HepG2 (cell line): ENCODE measurements at regions of chr2 and their contacts with region 1.

Region 1: GRCh38 chr2:88739985-88740600 is 48.6 kb downstream of the RPIA start:
- DNase-seq: peak; percentile 70
- ATAC-seq: peak; percentile 96
- H3K4me3 ChIP-seq: no peak overlapping the region
- H3K27ac ChIP-seq: no peak overlapping the region
- H3K4me1 ChIP-seq: peaks cover 9% of the 10 kb centered on the region
- H3K27me3 ChIP-seq: no peaks in the 10 kb centered on the region
- CTCF ChIP-seq: peak; percentile 92
- EP300 ChIP-seq: no peak
- POLR2A ChIP-seq: no peak
- RAD21 ChIP-seq: peak; percentile 61; the same call in 1 of the 2 replicates

Region 2: GRCh38 chr2:88765154-88765900 is 25.2 kb after region 1 on chr2:
- CTCF ChIA-PET with region 1: no interaction called
- POLR2A ChIA-PET with region 1: no interaction called
- in situ Hi-C with region 1: no loop called
- intact Hi-C with region 1: no loop called
- DNase-seq: no peak
- ATAC-seq: peak; percentile 23; the same call in 1 of the 3 replicates
- H3K4me3 ChIP-seq: no peak overlapping the region
- H3K27ac ChIP-seq: no peak overlapping the region
- H3K4me1 ChIP-seq: no peaks in the 10 kb centered on the region
- H3K27me3 ChIP-seq: no peaks in the 10 kb centered on the region
- CTCF ChIP-seq: no peak
- EP300 ChIP-seq: no peak
- POLR2A ChIP-seq: no peak
- RAD21 ChIP-seq: no peak

Region 3: GRCh38 chr2:88831792-88832248 is 91.7 kb after region 1 on chr2:
- CTCF ChIA-PET with region 1: no interaction called
- POLR2A ChIA-PET with region 1: no interaction called
- in situ Hi-C with region 1: no loop called
- intact Hi-C with region 1: loop called (anchors 1 kb)
- DNase-seq: peak; percentile 47
- ATAC-seq: peak; percentile 94
- H3K4me3 ChIP-seq: no peak overlapping the region
- H3K27ac ChIP-seq: no peak overlapping the region
- H3K4me1 ChIP-seq: no peaks in the 10 kb centered on the region
- H3K27me3 ChIP-seq: peaks cover 3 to 22% of the 10 kb centered on the region in 2 experiments; a peak in 3 of 5 replicates
- CTCF ChIP-seq: peak; percentile 88
- EP300 ChIP-seq: no peak
- POLR2A ChIP-seq: no peak
- RAD21 ChIP-seq: peak; percentile 40; the same call in 1 of the 2 replicates

Region 4: DNA sequence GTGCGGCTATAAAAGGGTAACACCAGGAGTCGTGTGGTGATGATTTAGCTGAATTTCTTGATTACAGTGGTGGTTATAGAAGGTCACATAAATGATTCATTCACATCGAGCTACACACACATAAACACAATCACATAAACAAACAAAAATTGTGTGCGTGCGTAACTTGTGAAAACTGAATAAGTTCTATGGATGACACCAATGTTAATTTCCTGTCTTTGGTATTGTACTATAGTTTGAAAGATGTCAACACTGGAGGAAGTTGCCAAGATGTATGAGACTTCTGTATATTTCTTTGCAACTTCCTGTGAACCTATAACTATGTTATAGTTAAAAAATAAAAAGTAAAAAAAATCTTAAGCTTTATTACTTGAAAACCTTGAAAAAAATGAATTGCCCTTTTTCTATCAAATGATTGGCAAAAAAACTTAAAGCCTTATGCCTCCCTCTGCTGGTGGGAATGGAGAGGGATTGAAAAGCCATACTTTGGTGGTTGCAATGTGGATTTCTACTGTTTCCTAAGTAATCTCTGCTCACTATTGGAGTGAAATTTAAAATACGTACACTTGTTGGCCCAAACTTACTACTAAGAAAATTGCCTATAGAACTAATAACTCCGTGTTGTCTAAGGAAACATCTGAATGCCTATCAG is 179.1 kb after region 1 on chr2:
- CTCF ChIA-PET with region 1: interaction called, 4 read pairs
- POLR2A ChIA-PET with region 1: no interaction called
- in situ Hi-C with region 1: no loop called
- intact Hi-C with region 1: loop called (anchors 1 kb)
- DNase-seq: peak; percentile 31
- ATAC-seq: peak; percentile 74
- H3K4me3 ChIP-seq: no peak overlapping the region
- H3K27ac ChIP-seq: no peak overlapping the region
- H3K4me1 ChIP-seq: no peaks in the 10 kb centered on the region
- H3K27me3 ChIP-seq: 0 out of 5 replicates have a peak, but pooled peaks cover 0 to 3% of the 10 kb centered on the region in 2 experiments
- CTCF ChIP-seq: peak; percentile 48
- EP300 ChIP-seq: no peak
- POLR2A ChIP-seq: no peak
- RAD21 ChIP-seq: no peak